ENCODE measurements at regions of chr6 and their contacts with region 1.

Region 1: DNA sequence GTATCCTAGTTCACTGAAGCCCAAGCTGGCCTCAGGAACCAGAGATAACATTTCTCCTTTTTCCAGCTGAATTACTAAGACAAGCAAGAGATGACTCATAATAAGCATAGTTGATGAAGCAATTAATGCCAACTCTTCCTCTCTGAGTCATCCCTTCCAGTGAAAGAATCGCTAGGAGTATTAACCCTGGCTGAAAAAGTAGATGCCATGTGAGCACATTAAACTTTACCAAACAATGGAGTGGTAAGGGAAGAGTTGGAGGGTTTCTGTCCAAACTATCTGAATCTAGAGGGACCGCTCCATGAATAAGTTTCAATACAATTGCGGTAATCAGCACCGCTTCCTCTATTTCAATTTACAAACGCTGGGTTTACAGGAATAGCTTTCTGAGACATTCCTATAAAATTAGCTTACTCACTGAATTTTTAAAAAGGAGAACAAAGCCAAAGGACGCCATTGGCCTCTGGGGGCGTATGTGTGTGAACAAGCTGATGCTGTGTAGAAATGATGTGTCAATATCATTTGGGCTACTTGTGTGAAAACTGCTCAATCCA is 48.3 kb downstream of the ATXN1 start:
- DNase-seq: peak; percentile 88 to 98 (median 95)
- H3K4me3 ChIP-seq: peak overlapping the region; percentile 12 to 63 (median 63)
- H3K4me3 Mint-ChIP-seq: peak overlapping the region in 1 of 2 donors; percentile 80
- H3K27ac ChIP-seq: peak overlapping the region; percentile 87 to 97
- H3K27ac Mint-ChIP-seq: peak overlapping the region; percentile 96 to 99 (median 98)
- H3K4me1 ChIP-seq: peaks cover 44 to 54% of the 10 kb centered on the region in 2 donors
- H3K4me1 Mint-ChIP-seq: peaks cover 58% of the 10 kb centered on the region
- H3K27me3 ChIP-seq: no peaks in the 10 kb centered on the region
- H3K27me3 Mint-ChIP-seq: peaks cover 0 to 2% (median 0%) of the 10 kb centered on the region in 3 donors
- CTCF ChIP-seq: peak; percentile 60

Region 2: GRCh38 chr6:16669227-16669626 is 43.8 kb before region 1 on chr6:
- intact Hi-C with region 1: loop called in 1 of 2 experiments (anchors 5 kb)
- DNase-seq: peak in 2 of 3 donors; percentile 53 to 62
- H3K4me3 ChIP-seq: no peak overlapping the region
- H3K4me3 Mint-ChIP-seq: no peak overlapping the region
- H3K27ac ChIP-seq: peak overlapping the region in 1 of 2 donors; percentile 78
- H3K27ac Mint-ChIP-seq: peak overlapping the region; percentile 54 to 88 (median 71)
- H3K4me1 ChIP-seq: peaks cover 31 to 39% of the 10 kb centered on the region in 2 donors
- H3K4me1 Mint-ChIP-seq: peaks cover 46% of the 10 kb centered on the region
- H3K27me3 ChIP-seq: no peaks in the 10 kb centered on the region
- H3K27me3 Mint-ChIP-seq: no peaks in the 10 kb centered on the region
- CTCF ChIP-seq: no peak

Region 3: GRCh38 chr6:16676978-16677377 is 36.0 kb before region 1 on chr6:
- intact Hi-C with region 1: loop called in 1 of 2 experiments (anchors 5 kb)
- DNase-seq: no peak
- H3K4me3 ChIP-seq: no peak overlapping the region
- H3K4me3 Mint-ChIP-seq: no peak overlapping the region
- H3K27ac ChIP-seq: no peak overlapping the region
- H3K27ac Mint-ChIP-seq: no peak overlapping the region
- H3K4me1 ChIP-seq: peaks cover 26 to 37% of the 10 kb centered on the region in 2 donors
- H3K4me1 Mint-ChIP-seq: peaks cover 44% of the 10 kb centered on the region
- H3K27me3 ChIP-seq: no peaks in the 10 kb centered on the region
- H3K27me3 Mint-ChIP-seq: no peaks in the 10 kb centered on the region
- CTCF ChIP-seq: no peak

Region 4: DNA sequence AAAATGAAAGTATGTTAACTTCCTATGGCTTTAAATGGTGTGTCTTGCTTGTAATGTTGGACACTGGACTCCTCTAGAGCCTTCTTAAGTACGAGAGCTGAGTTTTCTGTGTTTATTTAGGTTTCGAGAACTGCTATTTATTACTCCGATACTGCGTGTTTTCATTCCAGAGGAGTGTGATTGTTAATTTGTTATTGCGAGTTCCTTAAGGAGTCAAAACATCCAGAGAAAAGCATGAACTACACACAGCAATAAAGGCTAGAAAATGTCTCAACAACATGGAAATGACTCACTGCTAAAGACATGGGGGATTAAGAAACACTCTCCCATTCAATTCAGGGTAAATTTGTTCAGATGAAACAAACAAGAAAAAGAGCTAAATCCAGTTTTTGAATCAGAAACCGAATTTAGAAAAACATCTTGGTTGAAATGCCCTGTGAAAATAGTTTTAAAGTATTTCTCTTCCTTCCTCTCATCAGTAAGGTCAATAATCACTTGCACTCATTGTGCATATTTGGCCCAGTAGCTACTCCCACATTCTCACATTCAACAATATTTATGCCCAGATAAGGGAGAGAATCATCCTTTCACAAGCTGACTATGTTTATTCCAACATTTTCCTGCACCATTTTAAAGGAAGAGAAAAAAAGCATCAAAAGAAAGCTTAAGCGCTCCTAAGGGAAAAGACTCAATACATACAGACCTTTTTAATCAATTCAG is 12.3 kb after region 1 on chr6:
- intact Hi-C with region 1: loop called in 1 of 2 experiments (anchors 2 kb)
- DNase-seq: peak in 2 of 3 donors; percentile 78 to 85
- H3K4me3 ChIP-seq: peak overlapping the region in 1 of 3 experiments; percentile 45
- H3K4me3 Mint-ChIP-seq: peak overlapping the region in 1 of 2 donors; percentile 21
- H3K27ac ChIP-seq: peak overlapping the region in 1 of 2 donors; percentile 87
- H3K27ac Mint-ChIP-seq: peak overlapping the region; percentile 95 to 99 (median 96)
- H3K4me1 ChIP-seq: peaks cover 62 to 69% of the 10 kb centered on the region in 2 donors
- H3K4me1 Mint-ChIP-seq: peaks cover 61% of the 10 kb centered on the region
- H3K27me3 ChIP-seq: no peaks in the 10 kb centered on the region
- H3K27me3 Mint-ChIP-seq: no peaks in the 10 kb centered on the region
- CTCF ChIP-seq: no peak